Esophagus muscularis mucosa (tissue), 4 donors: ENCODE measurements at regions of chr1 and their contacts with region 1.

Region 1: DNA sequence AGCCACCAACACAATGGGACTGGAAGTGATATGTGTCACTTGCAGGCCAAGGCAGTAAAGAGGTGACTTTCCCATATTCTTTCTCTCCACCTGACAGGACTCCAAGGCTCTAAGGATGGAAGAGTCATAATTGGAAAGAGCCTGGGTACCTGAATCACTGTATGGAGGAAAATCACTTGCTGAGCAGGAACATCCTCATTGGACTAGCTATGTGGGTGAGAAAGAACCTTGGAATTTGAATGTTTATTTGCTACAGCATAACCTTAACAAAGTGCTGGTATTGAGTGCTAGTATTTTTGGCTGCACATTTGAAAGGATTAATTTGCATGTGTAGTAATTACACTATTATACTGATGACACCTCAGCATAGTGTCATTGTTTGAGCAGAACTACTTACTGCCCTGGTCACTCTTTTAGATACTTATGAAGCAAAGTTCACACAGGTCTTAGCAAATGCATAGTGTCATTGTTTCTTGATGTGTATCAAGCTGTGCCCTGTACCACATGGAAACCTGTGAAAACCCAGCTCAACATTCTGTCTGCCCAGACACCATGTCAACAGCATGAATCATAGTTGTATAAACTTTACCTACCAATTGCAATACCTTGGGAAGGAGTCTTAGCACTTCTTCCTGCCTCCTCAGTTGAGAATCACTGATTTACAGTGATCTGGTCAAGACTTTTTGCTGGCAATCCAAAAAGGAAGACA is 5.1 kb upstream of the S100A10 start:
- DNase-seq: no peak
- H3K4me3 ChIP-seq: no peak overlapping the region
- H3K27ac ChIP-seq: no peak overlapping the region
- H3K4me1 ChIP-seq: peaks cover 16 to 35% (median 27%) of the 10 kb centered on the region in 4 donors
- H3K27me3 ChIP-seq: no peaks in the 10 kb centered on the region
- CTCF ChIP-seq: no peak
- EP300 ChIP-seq: no peak
- POLR2A ChIP-seq: no peak

Region 2: DNA sequence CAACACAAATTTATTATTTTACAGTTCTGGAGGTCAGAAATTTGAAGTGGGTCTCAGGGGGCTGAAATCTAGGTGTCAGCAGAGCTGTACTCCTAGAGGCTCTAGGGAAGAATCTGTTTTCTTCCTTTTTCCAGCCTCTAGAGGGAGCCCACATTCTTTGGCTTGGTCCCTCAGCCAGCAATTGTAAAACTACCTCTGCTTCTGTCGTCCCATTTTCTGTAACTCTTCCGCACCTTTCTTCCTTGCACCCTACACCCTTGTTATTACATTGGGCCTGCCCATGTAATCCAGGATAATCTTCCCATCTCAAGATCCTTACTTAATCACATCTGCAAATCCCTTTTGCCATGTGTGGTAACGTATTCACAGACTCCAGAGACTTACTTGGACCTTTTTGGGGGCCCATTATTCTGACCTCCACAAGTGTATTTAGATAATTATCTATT is 64.7 kb before region 1 on chr1:
- intact Hi-C with region 1: loop called (anchors 2 kb)
- DNase-seq: peak; percentile 72
- H3K4me3 ChIP-seq: no peak overlapping the region
- H3K27ac ChIP-seq: no peak overlapping the region
- H3K4me1 ChIP-seq: peaks cover 0 to 3% (median 0%) of the 10 kb centered on the region in 4 donors
- H3K27me3 ChIP-seq: no peaks in the 10 kb centered on the region
- CTCF ChIP-seq: peak; percentile 74 to 84 (median 78)
- EP300 ChIP-seq: no peak
- POLR2A ChIP-seq: no peak

Region 3: DNA sequence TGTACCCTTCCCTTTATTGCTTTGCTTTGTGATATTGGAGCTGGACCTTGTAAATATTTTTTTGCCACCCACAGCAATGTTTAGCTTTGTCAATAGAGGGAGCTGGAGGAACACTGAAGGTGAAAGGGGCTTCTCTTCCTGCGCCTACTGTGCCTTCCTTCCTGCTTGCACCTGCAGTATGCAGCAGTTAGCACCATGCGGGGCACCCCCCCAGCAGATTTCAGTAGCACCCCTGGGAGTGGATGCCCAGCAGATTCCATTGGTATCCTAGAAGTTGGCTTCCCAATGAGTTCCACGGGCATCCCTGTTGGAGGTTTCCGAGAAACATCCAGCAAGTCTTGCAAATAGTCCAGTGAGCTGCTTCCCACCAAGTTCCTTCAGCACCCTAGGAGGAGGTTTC is 30.7 kb before region 1 on chr1:
- intact Hi-C with region 1: loop called (anchors 2 kb)
- DNase-seq: no peak
- H3K4me3 ChIP-seq: no peak overlapping the region
- H3K27ac ChIP-seq: no peak overlapping the region
- H3K4me1 ChIP-seq: peaks cover 15 to 33% (median 18%) of the 10 kb centered on the region in 4 donors
- H3K27me3 ChIP-seq: no peaks in the 10 kb centered on the region
- CTCF ChIP-seq: peak; percentile 70 to 83 (median 71)
- EP300 ChIP-seq: no peak
- POLR2A ChIP-seq: no peak